ENCODE measurements at regions of chr3 and their contacts with region 1.

Region 1: DNA sequence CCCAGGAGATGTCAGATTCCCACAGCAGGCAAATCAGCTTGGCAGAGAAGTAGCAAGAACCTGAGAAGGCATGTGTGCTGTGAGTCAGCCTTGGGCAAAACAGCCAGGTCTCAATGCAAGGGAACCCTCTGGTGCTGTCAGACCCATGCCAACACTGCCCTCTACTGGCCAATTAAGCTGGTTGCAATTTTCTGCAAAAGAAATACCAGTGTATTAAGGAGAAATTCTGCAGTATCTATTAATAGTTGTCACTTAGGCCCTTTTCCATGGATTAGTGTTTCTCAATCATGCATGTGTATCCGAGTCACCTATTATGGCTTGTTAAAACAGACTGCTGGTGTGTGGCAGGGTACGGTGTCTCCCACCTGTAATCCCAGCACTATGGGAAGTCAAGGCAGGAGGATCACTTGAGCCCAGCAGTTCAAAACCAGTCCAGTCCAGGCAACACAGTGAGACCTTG is 26.2 kb downstream of the MAP4 start:
- DNase-seq: peak; percentile 69 to 78
- H3K4me3 ChIP-seq: no peak overlapping the region
- H3K27ac ChIP-seq: no peak overlapping the region
- H3K4me1 ChIP-seq: peaks cover 6% of the 10 kb centered on the region
- H3K27me3 ChIP-seq: no peaks in the 10 kb centered on the region
- CTCF ChIP-seq: peak; percentile 84

Region 2: GRCh38 chr3:46593274-46593862 is 1396.6 kb before region 1 on chr3:
- CTCF ChIA-PET with region 1: no interaction called
- POLR2A ChIA-PET with region 1: no interaction called
- intact Hi-C with region 1: no loop called
- DNase-seq: no peak
- H3K4me3 ChIP-seq: no peak overlapping the region
- H3K27ac ChIP-seq: no peak overlapping the region
- H3K4me1 ChIP-seq: no peaks in the 10 kb centered on the region
- H3K27me3 ChIP-seq: no peaks in the 10 kb centered on the region
- CTCF ChIP-seq: no peak

Region 3: DNA sequence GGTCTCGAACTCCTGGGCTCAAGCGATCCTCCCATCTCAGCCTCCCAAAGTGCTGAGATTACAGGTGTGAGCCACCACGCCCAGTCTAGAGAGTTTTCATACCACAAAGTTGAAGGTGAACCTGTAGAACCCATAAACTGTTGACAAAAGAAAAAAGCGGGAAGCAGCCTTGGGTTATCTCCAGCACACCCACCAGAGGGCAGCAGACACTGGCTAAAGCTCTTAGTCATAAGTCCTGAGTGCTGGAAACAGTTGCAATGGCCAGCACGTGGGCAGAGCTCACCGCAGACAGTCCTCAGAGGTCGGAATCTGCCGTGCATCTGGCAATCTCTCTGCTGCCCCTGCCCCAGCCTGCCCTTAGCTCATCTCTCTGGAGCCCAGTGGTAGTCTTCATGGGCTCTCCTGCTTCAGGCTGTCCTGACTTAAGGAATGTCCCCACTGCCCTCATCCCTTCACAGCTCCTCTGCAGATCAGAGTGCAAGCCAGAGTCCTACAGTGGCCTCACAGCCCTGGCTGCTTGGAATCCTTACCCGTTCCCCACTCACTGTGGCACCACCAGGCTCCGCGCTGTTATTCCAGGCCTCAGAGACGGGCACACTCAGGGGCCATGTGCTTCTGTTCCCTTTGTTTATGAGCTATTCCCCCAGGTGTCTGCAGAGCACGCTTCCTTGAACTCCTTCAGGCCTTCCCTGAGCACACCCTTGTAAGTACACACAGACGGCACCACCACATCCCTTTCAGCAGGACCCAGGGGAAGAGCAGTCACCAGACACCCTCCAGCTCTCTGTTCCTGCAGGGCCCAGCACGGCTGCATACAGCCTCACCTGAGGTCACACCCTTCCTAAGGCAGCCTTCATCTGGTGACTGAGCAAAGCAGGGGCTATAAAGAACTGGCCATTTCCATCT is 467.7 kb before region 1 on chr3:
- CTCF ChIA-PET with region 1: no interaction called
- POLR2A ChIA-PET with region 1: no interaction called
- intact Hi-C with region 1: loop called (anchors 1 kb)
- DNase-seq: peak; percentile 73
- H3K4me3 ChIP-seq: no peak overlapping the region
- H3K27ac ChIP-seq: no peak overlapping the region
- H3K4me1 ChIP-seq: no peaks in the 10 kb centered on the region
- H3K27me3 ChIP-seq: no peaks in the 10 kb centered on the region
- CTCF ChIP-seq: peak; percentile 85

Region 4: GRCh38 chr3:47772788-47773187 is 217.2 kb before region 1 on chr3:
- CTCF ChIA-PET with region 1: no interaction called
- POLR2A ChIA-PET with region 1: no interaction called
- intact Hi-C with region 1: no loop called
- DNase-seq: no peak
- H3K4me3 ChIP-seq: no peak overlapping the region
- H3K27ac ChIP-seq: no peak overlapping the region
- H3K4me1 ChIP-seq: no peaks in the 10 kb centered on the region
- H3K27me3 ChIP-seq: no peaks in the 10 kb centered on the region
- CTCF ChIP-seq: no peak

Region 5: GRCh38 chr3:47836986-47837385 is 153.0 kb before region 1 on chr3:
- CTCF ChIA-PET with region 1: interaction called, 7 read pairs
- POLR2A ChIA-PET with region 1: no interaction called
- intact Hi-C with region 1: loop called (anchors 2 kb)
- DNase-seq: no peak
- H3K4me3 ChIP-seq: no peak overlapping the region
- H3K27ac ChIP-seq: no peak overlapping the region
- H3K4me1 ChIP-seq: no peaks in the 10 kb centered on the region
- H3K27me3 ChIP-seq: no peaks in the 10 kb centered on the region
- CTCF ChIP-seq: no peak

Region 6: DNA sequence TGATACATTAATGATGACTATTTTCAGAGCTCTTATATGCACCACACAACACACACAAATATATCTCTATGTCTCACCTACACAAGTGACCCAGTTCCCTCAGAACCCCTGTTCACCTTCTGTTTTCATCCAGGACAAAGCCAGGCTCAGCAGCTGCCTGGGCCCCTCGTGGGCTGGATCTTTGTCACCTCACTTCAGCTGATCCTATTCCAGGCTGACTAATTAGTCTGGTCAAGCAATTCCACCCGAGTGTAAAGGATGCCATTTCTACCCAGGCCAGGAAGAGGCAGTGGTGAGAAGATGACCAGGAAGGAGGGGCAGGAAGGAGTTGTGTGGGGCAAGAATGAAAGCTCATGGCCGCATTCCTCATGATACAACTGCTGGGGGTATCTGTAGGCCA is 124.8 kb before region 1 on chr3:
- CTCF ChIA-PET with region 1: no interaction called
- POLR2A ChIA-PET with region 1: no interaction called
- intact Hi-C with region 1: loop called (anchors 5 kb)
- DNase-seq: no peak
- H3K4me3 ChIP-seq: no peak overlapping the region
- H3K27ac ChIP-seq: no peak overlapping the region
- H3K4me1 ChIP-seq: no peaks in the 10 kb centered on the region
- H3K27me3 ChIP-seq: no peaks in the 10 kb centered on the region
- CTCF ChIP-seq: no peak

Region 7: DNA sequence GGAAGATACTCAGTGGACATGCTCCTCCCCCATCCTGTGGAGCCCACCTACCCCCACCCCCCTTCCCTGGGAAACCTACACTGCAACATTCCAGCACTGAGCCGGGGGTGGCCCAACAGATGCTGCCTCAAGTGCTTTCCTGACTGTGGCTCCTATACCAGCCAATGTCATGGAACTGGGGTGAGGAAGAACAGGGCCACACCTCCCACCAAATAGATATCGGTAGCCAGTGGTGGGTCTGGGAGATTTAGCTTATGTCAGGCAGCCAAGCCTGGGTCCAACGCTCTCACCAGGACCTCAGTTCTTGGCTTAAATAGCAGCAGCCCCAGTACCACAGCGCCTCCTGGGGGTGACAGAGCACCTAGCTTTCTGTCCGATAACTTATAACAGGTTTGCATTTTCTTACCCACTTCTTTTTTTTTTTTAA is 168.0 kb after region 1 on chr3:
- CTCF ChIA-PET with region 1: no interaction called
- POLR2A ChIA-PET with region 1: no interaction called
- intact Hi-C with region 1: no loop called
- DNase-seq: peak in 1 of 2 experiments; percentile 40
- H3K4me3 ChIP-seq: no peak overlapping the region
- H3K27ac ChIP-seq: peak overlapping the region; percentile 30; the same call in 1 of the 2 replicates
- H3K4me1 ChIP-seq: peaks cover 35% of the 10 kb centered on the region
- H3K27me3 ChIP-seq: no peaks in the 10 kb centered on the region
- CTCF ChIP-seq: peak; percentile 69

Region 8: GRCh38 chr3:48180531-48181253 is 190.7 kb after region 1 on chr3:
- CTCF ChIA-PET with region 1: no interaction called
- POLR2A ChIA-PET with region 1: no interaction called
- intact Hi-C with region 1: no loop called
- DNase-seq: no peak
- H3K4me3 ChIP-seq: no peak overlapping the region
- H3K27ac ChIP-seq: no peak overlapping the region
- H3K4me1 ChIP-seq: no peaks in the 10 kb centered on the region
- H3K27me3 ChIP-seq: no peaks in the 10 kb centered on the region
- CTCF ChIP-seq: no peak